ENCODE measurements at regions of chr9 and their contacts with region 1.

Region 1: DNA sequence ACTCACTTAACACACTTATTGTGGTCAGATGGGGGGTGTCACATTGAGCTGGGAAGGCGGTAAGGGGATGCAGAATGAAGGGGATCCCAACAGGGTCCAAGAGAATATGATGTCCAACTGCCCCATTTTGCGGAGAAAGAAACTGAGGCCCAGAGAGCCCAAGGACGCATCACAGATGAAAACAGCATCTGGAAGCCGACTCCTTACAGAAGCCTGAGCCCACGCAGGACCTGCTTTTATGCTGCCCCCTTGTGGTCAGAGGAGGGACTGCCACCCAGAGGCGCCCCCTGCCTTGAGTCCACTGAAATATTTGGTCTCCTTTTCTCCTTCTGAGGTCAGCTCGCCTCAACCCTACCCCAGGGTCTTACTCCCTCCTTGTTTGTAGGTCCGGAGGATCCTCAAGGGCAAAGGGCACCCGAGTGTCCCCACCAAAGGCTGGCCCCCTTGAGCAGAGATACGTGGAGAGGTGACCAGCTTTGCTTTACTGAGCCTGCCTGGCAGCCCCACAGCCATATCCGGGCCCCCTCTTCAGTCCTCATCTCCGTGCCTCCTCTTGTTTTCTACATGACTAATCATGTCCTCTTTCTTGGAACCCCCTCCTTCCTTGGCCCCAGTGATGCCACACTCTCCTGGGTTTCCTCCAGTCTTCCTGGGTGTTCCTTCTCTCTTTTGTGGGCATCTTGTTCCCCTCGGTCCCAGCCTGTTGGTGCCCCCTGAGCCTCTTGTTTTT is 30.0 kb upstream of the TTLL11 start:
- DNase-seq: peak; percentile 43 to 86
- H3K4me3 ChIP-seq: no peak overlapping the region
- H3K4me1 ChIP-seq: no peaks in the 10 kb centered on the region
- H3K27me3 ChIP-seq: no peaks in the 10 kb centered on the region

Region 2: GRCh38 chr9:122051351-122052321 is 71.4 kb before region 1 on chr9:
- in situ Hi-C with region 1: no loop called
- DNase-seq: no peak
- H3K4me3 ChIP-seq: no peak overlapping the region
- H3K4me1 ChIP-seq: no peaks in the 10 kb centered on the region
- H3K27me3 ChIP-seq: no peaks in the 10 kb centered on the region

Region 3: DNA sequence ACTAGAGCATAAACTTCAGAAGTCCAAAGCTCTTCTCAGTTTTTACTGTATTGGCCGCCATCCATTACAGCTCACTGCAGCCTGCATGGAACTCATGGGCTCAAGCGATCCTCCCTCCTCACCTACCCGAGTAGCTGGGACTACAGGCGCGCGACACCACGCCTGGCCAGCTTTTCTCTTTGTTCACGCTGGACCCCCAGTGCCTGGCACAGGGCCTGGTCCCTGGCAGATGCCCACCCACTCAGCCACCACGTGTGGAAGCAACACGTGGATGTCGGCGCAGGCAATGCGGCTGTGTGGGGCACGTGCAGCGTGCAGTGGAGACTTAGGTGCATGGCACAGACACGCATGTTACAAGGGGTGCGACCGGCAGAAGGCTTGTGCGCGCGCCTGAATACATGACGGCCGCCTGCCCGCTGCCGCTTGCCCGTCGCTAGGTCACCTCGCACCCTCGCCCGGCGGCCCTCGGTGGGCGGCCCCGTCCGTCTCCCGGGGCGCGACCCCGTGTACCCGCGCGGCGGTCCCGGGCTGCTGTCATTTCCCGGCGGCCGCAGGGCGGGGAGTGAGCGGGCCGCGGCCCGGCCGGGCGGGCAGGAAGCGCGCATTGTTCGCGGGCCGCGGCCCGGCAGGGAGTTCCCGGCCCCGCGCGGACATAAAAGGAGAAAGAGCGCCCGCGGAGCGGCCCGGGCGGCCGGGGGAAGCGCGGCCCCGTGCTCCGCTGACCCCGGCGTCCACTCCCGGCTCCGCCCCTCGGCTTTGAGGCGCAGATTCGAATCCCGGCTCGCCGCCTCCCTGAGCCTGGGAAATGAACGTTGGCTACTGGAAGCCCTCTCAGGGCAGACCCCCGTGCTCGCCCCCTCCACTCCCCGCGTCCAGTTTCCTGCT is 223.7 kb after region 1 on chr9:
- in situ Hi-C with region 1: loop called (anchors 5 kb)
- DNase-seq: no peak
- H3K4me3 ChIP-seq: no peak overlapping the region
- H3K4me1 ChIP-seq: no peaks in the 10 kb centered on the region
- H3K27me3 ChIP-seq: 0 out of 2 replicates have a peak, but pooled peaks cover 2% of the 10 kb centered on the region

Region 4: DNA sequence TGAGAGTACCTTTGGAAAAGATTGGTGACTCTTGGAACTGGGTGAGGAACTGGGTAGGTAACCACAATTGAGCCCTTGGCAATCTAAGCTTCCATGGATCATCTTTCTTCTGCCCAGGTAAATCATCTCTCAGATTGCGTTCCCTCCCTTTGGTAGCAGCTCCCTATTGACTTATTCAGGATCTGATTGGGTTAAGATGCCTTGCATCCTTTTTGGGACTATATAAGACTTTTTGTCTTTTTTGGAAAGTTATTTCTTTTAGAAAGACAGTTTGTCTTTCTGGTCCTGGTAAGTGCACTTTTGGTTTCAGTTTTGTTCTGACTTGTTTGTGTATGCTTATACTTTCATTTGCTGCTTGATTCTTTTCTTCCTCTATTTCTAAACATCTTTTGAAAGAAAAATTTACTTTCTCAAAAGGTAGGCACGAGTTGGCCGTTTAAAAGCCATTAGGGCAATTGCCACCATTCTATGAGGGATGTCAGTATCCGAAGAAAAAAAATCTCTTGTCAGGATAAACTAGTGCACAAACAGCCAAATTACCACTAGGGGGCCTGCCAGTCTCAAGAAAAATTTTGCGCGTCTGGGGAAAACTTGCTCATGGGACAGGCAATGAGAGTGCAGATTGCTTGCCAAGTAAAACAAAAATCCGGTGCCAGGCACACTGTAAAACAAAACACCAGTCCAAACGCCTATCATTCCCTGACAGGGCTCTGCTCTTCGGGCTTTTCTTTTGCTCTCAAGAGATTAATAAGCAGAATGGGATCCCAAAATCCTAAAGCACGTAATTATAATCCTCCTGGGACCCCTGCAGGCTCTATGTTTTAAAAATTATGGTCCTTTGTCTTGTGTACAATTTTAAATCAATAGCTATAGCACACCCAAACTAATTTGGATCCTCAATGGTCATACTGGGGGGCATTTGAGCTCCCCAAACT is 341.8 kb after region 1 on chr9:
- in situ Hi-C with region 1: loop called (anchors 25 kb)
- DNase-seq: peak; percentile 51 to 75
- H3K4me3 ChIP-seq: no peak overlapping the region
- H3K4me1 ChIP-seq: no peaks in the 10 kb centered on the region
- H3K27me3 ChIP-seq: peaks cover 7% of the 10 kb centered on the region

Region 5: GRCh38 chr9:122810306-122810946 is 687.4 kb after region 1 on chr9:
- in situ Hi-C with region 1: loop called (anchors 5 kb)
- DNase-seq: peak; percentile 54 to 76
- H3K4me3 ChIP-seq: no peak overlapping the region
- H3K4me1 ChIP-seq: no peaks in the 10 kb centered on the region
- H3K27me3 ChIP-seq: no peaks in the 10 kb centered on the region

Region 6: GRCh38 chr9:123349691-123350480 is 1226.8 kb after region 1 on chr9:
- in situ Hi-C with region 1: loop called (anchors 25 kb)
- DNase-seq: peak; percentile 72 to 82
- H3K4me3 ChIP-seq: no peak overlapping the region
- H3K4me1 ChIP-seq: no peaks in the 10 kb centered on the region
- H3K27me3 ChIP-seq: peaks cover 21% of the 10 kb centered on the region